BJ (cell line): ENCODE measurements at regions of chr6 and their contacts with region 1.

Region 1: DNA sequence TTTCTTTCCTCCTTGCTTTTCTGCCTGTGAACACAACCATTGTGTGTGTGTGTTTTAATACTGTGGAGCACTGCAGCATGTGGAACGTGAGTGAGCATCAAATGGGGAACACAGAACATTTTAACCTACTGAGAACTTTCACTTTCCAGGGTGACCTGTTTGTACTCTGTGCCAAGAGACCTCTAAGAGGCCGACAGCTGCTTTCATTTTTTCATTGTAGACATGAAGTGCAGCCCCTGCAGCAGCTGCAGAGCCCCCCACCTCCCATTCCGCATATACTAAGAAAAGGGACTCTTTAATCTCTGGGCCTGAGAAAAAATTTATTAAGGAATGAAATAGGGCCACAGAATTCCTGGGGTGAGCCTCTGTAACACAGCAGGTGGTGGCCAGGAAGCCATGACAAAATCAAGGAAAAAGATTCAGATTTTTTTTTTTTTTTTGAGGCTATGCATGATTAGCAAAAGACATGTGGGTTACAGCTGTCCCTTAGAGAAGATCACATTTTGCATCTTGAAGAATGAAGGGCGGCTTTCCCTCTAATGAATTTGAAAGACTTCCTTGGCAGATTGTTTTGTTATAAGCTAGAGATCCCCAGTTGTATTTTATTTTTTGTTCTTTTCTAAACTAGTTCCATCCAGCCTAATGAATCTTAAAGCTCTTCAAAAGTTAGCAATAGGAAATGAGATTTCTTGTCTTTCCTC is 503.4 kb downstream of the CD109 start:
- DNase-seq: no peak
- H3K4me3 ChIP-seq: no peak overlapping the region
- H3K27me3 ChIP-seq: no peaks in the 10 kb centered on the region
- CTCF ChIP-seq: no peak

Region 2: DNA sequence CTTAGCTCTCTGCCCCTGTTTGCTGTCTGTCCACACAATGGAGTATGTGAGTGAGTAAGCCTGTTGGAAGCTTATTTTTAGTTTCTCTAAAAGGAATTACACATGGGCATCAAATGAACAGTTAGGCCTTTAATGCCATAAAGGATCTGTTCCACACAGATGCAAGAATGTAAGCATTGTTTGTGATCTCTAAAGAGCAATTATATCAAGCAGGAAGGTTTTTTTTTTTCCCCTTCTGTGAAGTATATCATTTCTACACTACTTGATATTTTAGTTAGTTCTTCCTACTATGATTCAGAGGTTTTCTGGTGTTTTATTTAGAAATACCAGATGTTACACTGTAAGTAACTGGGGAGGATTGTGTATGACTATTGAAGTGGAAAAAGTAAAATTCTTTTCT is 379.0 kb after region 1 on chr6:
- CTCF ChIA-PET with region 1: no interaction called
- POLR2A ChIA-PET with region 1: interaction called, 12 read pairs
- DNase-seq: peak; percentile 77
- H3K4me3 ChIP-seq: no peak overlapping the region
- H3K27me3 ChIP-seq: no peaks in the 10 kb centered on the region
- CTCF ChIP-seq: no peak